ENCODE measurements at regions of chr10 and their contacts with region 1.

Region 1: DNA sequence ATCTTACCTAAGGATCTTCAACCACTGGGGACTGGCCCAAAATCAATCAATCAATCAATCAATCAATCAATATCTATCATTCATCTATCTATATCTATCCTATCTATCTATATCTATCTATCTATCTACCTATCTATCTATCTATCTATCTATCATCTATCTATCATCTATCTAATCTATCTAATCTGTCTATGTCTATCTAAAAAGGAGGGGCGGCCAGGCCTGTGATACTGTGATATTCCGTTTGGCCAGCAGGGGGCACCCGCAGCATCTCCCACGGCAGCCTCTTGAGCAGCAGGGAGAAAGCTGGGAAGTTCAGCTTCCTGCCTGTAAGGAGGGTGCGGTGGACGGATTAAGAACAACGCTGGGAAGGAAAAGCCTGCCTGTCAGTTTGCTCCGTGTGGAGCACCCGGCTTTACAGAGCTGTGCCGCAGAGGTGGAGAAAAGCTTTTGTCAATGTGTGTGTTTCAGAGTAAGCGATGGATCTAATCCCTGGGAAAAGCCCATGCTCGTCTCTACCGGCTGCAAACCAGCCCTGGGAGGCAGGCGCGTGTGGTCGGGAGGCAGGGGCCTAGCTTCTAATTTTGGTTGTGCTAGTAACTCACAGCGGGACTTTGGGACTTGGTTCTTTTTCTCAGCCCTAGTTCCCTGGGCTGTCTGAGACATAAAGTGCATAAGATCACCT is 125.0 kb downstream of the SH2D4B start:
- DNase-seq: peak; percentile 30 to 73 (median 58)
- ATAC-seq: peak; percentile 70
- H3K4me3 ChIP-seq: no peak overlapping the region
- H3K4me3 Mint-ChIP-seq: peak overlapping the region in 9 of 10 donors; percentile 26 to 76 (median 60)
- H3K27ac ChIP-seq: no peak overlapping the region
- H3K27ac Mint-ChIP-seq: peak overlapping the region in 1 of 9 donors; percentile 7
- H3K4me1 ChIP-seq: peaks cover 4 to 5% of the 10 kb centered on the region in 2 donors
- H3K4me1 Mint-ChIP-seq: peaks cover 4 to 10% (median 8%) of the 10 kb centered on the region in 7 donors
- H3K27me3 ChIP-seq: peaks cover 0 to 6% of the 10 kb centered on the region in 2 donors
- H3K27me3 Mint-ChIP-seq: peaks cover 7 to 22% (median 16%) of the 10 kb centered on the region in 5 donors

Region 2: DNA sequence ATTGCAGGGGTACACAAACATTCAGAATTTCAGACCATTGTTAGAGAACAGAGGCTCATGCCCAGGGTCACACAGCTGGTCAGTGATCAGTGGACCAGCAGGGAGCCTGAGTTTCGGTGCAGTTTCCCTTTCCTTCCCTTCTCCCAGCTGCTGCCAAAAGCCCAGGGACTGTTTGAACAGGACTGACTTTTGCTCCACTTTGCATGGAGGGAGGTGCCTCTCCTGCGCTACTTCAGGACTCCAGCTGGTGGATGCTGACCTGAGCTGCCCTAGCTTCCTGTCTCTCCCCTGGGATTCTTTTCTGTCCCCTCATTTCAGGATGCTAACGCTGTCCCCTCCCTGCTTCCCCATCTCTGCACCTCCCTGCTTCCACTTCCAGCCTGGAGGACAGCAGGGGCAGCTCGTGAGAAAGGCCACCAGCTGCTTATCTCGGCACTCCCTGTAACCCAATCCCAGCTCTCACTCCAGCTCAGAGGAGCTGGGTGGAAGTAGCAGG is 110.5 kb before region 1 on chr10:
- CTCF ChIA-PET with region 1: no interaction called
- POLR2A ChIA-PET with region 1: no interaction called
- intact Hi-C with region 1: loop called in 1 of 2 experiments (anchors 10 kb)
- DNase-seq: no peak
- ATAC-seq: no peak
- H3K4me3 ChIP-seq: no peak overlapping the region
- H3K4me3 Mint-ChIP-seq: no peak overlapping the region
- H3K27ac ChIP-seq: no peak overlapping the region
- H3K27ac Mint-ChIP-seq: no peak overlapping the region
- H3K4me1 ChIP-seq: no peaks in the 10 kb centered on the region
- H3K4me1 Mint-ChIP-seq: no peaks in the 10 kb centered on the region
- H3K27me3 ChIP-seq: no peaks in the 10 kb centered on the region
- H3K27me3 Mint-ChIP-seq: peaks cover 4 to 23% (median 7%) of the 10 kb centered on the region in 5 donors

Region 3: GRCh38 chr10:81838953-81839352 is 1176.2 kb after region 1 on chr10:
- CTCF ChIA-PET with region 1: no interaction called
- POLR2A ChIA-PET with region 1: no interaction called
- intact Hi-C with region 1: loop called in 1 of 2 experiments (anchors 2 kb)
- DNase-seq: peak in 1 of 9 donors; percentile 2
- ATAC-seq: no peak
- H3K4me3 ChIP-seq: no peak overlapping the region
- H3K4me3 Mint-ChIP-seq: no peak overlapping the region
- H3K27ac ChIP-seq: no peak overlapping the region
- H3K27ac Mint-ChIP-seq: no peak overlapping the region
- H3K4me1 ChIP-seq: no peaks in the 10 kb centered on the region
- H3K4me1 Mint-ChIP-seq: no peaks in the 10 kb centered on the region
- H3K27me3 ChIP-seq: no peaks in the 10 kb centered on the region
- H3K27me3 Mint-ChIP-seq: peaks cover 0 to 27% (median 5%) of the 10 kb centered on the region in 5 donors